ENCODE measurements at regions of chr17 and their contacts with region 1.

Region 1: GRCh38 chr17:21457051-21458026 is 81.2 kb downstream of the KCNJ12 start:
- DNase-seq: peak; percentile 86 to 95 (median 90)
- ATAC-seq: peak; percentile 81 to 94 (median 93)
- H3K4me3 ChIP-seq: no peak overlapping the region
- H3K27ac ChIP-seq: no peak overlapping the region
- H3K4me1 ChIP-seq: peaks cover 0 to 15% (median 6%) of the 10 kb centered on the region in 12 donors
- H3K27me3 ChIP-seq: no peaks in the 10 kb centered on the region
- CTCF ChIP-seq: peak; percentile 91 to 99 (median 94)
- POLR2A ChIP-seq: no peak

Region 2: GRCh38 chr17:21119247-21119918 is 338.0 kb before region 1 on chr17:
- intact Hi-C with region 1: loop called in 6 of 10 experiments (anchors 5 to 10 kb)
- DNase-seq: peak; percentile 67 to 75 (median 70)
- ATAC-seq: peak; percentile 47 to 86 (median 79)
- H3K4me3 ChIP-seq: peak overlapping the region in 4 of 12 donors; percentile 8 to 31 (median 17)
- H3K27ac ChIP-seq: peak overlapping the region in 2 of 12 donors; percentile 58 to 68
- H3K4me1 ChIP-seq: peaks cover 0 to 19% (median 4%) of the 10 kb centered on the region in 12 donors
- H3K27me3 ChIP-seq: no peaks in the 10 kb centered on the region
- CTCF ChIP-seq: peak; percentile 73 to 88 (median 78)
- POLR2A ChIP-seq: no peak

Region 3: DNA sequence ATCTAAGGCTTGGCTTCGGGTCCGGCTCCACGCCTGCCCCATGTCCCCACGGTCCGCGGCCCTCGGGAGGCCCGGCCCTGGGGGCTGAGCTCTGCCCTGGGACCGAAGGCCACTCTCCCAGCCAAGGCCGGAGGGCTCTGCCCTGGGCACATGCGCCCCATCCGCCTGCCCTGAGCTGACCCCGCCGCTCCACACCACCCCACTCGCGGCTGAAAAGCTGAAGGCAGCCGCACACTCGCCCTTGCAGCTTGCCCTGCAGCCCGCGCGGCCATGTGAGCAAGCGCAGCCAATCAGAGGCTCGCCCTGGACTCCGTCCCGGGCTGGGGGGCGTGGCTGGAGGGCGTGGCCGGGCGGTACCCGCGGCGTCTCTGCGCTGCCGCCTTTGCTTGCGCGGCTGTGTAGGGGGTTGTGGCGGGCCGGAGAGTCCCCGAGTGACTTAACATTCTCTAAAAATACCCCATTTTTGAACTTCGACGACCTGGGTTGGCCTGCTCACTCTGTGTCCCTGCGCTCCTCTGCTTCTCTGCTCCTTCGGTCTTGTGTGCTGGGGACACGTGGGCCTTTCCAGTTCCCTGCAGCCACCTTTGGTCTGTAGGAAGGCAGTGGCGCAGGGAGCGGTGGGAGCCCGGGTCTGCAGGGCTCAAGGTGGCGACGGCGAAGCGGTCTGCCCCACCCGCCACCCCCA is 181.6 kb before region 1 on chr17:
- intact Hi-C with region 1: loop called in 7 of 10 experiments (anchors 5 to 10 kb)
- DNase-seq: peak; percentile 95 to 98 (median 96)
- ATAC-seq: peak; percentile 94 to 98 (median 97)
- H3K4me3 ChIP-seq: peak overlapping the region; percentile 40 to 81 (median 64)
- H3K27ac ChIP-seq: peak overlapping the region; percentile 14 to 87 (median 74)
- H3K4me1 ChIP-seq: peaks cover 0 to 36% (median 16%) of the 10 kb centered on the region in 12 donors
- H3K27me3 ChIP-seq: no peaks in the 10 kb centered on the region
- CTCF ChIP-seq: peak in 3 of 12 donors; percentile 8 to 10 (median 9)
- POLR2A ChIP-seq: peak in 1 of 2 donors; percentile 60

Region 4: GRCh38 chr17:21284319-21285163 is 172.8 kb before region 1 on chr17 and contains the start of gene MAP2K3:
- intact Hi-C with region 1: loop called in 8 of 10 experiments (anchors 5 to 10 kb)
- DNase-seq: peak; percentile 99 to 100 (median 100)
- ATAC-seq: peak; percentile 79 to 89 (median 86)
- H3K4me3 ChIP-seq: peak within 1 kb of the TSS; percentile 49 to 99 (median 92)
- H3K27ac ChIP-seq: peak within 1 kb of the TSS; percentile 83 to 99 (median 94)
- H3K4me1 ChIP-seq: peaks cover 16 to 72% (median 50%) of the 10 kb centered on the region in 12 donors
- H3K27me3 ChIP-seq: no peaks in the 10 kb centered on the region
- CTCF ChIP-seq: peak in 1 of 12 donors; percentile 12
- POLR2A ChIP-seq: peak; percentile 90 to 99
- total RNA-seq, gene MAP2K3: 29.4 to 170 (median 54.4) TPM

Region 5: DNA sequence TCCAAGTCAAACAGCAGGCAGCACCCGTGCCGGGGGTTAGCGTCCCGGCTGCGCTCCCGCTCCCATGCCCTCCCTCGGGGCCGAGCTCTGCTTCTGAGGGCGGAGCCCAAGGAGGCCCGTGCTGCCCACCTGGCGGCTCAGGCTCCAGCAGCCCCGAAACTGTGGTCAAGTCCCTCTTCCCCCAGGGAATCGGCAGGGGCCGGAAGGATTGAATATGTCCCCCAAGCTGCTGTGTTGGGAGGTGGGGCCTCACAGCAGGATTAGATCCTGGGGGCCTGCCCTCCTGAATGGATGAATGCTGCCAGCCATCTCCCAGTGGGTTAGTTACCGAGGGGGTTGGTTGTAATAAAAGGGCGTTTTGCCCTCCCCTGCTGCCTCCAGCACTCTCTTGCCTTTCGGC is 138.9 kb before region 1 on chr17:
- intact Hi-C with region 1: loop called in 5 of 10 experiments (anchors 5 to 10 kb)
- DNase-seq: no peak
- ATAC-seq: no peak
- H3K4me3 ChIP-seq: no peak overlapping the region
- H3K27ac ChIP-seq: no peak overlapping the region
- H3K4me1 ChIP-seq: peaks cover 0 to 10% (median 3%) of the 10 kb centered on the region in 12 donors
- H3K27me3 ChIP-seq: no peaks in the 10 kb centered on the region
- CTCF ChIP-seq: no peak
- POLR2A ChIP-seq: no peak